CD8-positive, alpha-beta memory T cell (primary cell): ENCODE measurements at regions of chr6 and their contacts with region 1.

Region 1: GRCh38 chr6:35590622-35591066 is 77.9 kb upstream of the TULP1 start:
- DNase-seq: no peak
- H3K4me3 ChIP-seq: no peak overlapping the region
- H3K4me3 Mint-ChIP-seq: peak overlapping the region in 1 of 7 donors; percentile 44
- H3K27ac ChIP-seq: no peak overlapping the region
- H3K27ac Mint-ChIP-seq: peak overlapping the region in 7 of 8 donors; percentile 47 to 85 (median 68)
- H3K4me1 ChIP-seq: peaks cover 93% of the 10 kb centered on the region
- H3K4me1 Mint-ChIP-seq: peaks cover 68 to 92% (median 82%) of the 10 kb centered on the region in 3 donors
- H3K27me3 ChIP-seq: no peaks in the 10 kb centered on the region
- H3K27me3 Mint-ChIP-seq: no peaks in the 10 kb centered on the region

Region 2: DNA sequence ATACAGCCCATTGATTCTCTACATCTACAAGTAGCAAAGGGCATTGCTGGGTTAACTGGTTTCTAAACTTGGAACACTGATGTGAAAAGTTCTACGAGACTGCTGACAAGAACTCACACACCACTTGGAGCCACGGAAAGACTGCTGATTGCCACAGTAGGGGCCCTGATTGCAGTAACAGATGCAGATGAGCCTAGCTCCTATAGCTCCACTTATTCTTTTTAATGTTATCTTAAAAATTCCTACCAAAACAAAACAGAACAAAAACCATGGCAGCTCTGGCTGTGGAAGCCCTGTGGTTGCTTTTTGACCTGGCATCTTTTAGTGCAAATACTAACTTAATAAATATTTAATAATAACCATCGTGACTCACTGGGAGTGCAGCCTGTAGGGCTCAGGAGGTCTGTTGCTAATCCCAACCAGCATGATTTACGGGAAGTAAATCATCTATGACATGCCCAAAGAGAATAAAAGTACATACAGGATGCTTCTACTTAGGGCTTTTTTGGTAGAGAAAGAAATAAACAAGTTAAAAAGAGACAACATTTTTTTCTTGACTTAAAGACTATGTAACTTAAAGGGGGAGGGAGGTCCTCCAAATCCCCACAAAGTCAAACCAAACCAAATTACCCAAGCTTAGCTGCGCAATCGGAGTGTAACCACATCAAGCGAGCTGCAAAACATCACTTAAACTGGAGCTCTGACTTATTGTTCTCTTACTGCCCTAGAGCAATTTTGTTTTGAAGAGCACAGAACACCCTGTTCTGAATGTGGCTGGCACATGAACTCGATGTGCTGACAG is 10.9 kb after region 1 on chr6:
- CTCF ChIA-PET with region 1: interaction called, 52 read pairs
- POLR2A ChIA-PET with region 1: interaction called, 18 read pairs
- DNase-seq: peak; percentile 23 to 92 (median 83)
- H3K4me3 ChIP-seq: peak overlapping the region; percentile 58
- H3K4me3 Mint-ChIP-seq: peak overlapping the region; percentile 76 to 85 (median 81)
- H3K27ac ChIP-seq: peak overlapping the region; percentile 44
- H3K27ac Mint-ChIP-seq: peak overlapping the region; percentile 71 to 97 (median 86)
- H3K4me1 ChIP-seq: peaks cover 83% of the 10 kb centered on the region
- H3K4me1 Mint-ChIP-seq: peaks cover 69 to 92% (median 84%) of the 10 kb centered on the region in 3 donors
- H3K27me3 ChIP-seq: no peaks in the 10 kb centered on the region
- H3K27me3 Mint-ChIP-seq: no peaks in the 10 kb centered on the region